Panc1 (cell line): ENCODE measurements at regions of chr14 and their contacts with region 1.

Region 1: DNA sequence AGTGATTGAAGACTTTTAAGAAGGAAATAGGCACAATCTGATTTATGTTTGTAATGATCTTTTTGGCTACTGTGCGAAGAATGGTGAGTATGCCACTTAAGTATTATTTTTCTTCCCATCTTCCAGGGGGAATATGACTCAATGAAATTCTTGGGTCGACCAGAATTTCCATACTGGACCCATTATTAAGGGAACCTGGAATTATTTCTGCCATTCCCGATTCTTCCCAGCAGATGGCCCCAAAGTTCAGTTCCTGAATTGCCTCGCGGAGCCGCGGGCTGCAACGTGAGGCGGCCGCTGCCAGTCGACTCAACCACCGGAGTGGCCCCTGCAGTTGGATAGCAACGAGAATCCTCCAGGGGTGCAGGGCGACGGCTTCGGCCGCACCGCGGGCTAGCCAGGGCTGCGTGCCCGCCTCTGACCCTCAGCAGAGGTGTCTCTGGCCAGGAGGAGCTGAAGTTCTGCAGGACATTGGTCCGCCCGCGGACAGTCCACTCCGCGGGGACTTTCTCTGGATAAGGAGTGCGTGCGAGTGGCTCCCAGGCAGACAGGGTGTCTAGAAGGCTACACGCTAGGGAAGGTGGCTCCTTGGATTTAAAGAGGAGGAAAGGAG is 628 bp upstream of the TSHR start:
- DNase-seq: peak; percentile 33
- ATAC-seq: peak; percentile 95
- H3K4me3 ChIP-seq: peak overlapping the region; percentile 39 to 60
- H3K27ac ChIP-seq: no peak overlapping the region
- H3K4me1 ChIP-seq: no peaks in the 10 kb centered on the region
- H3K27me3 ChIP-seq: peaks cover 13% of the 10 kb centered on the region
- CTCF ChIP-seq: peak; percentile 82

Region 2: GRCh38 chr14:80987235-80988032 is 32.6 kb after region 1 on chr14:
- CTCF ChIA-PET with region 1: interaction called, 7 read pairs
- POLR2A ChIA-PET with region 1: no interaction called
- in situ Hi-C with region 1: no loop called
- intact Hi-C with region 1: loop called (anchors 1 kb)
- DNase-seq: peak; percentile 55
- ATAC-seq: peak; percentile 77; the same call in 1 of the 2 replicates
- H3K4me3 ChIP-seq: no peak overlapping the region
- H3K27ac ChIP-seq: no peak overlapping the region
- H3K4me1 ChIP-seq: no peaks in the 10 kb centered on the region
- H3K27me3 ChIP-seq: no peaks in the 10 kb centered on the region; the same call in 1 of the 2 replicates
- CTCF ChIP-seq: peak; percentile 85

Region 3: GRCh38 chr14:81170104-81170828 is 215.5 kb after region 1 on chr14:
- CTCF ChIA-PET with region 1: no interaction called
- POLR2A ChIA-PET with region 1: no interaction called
- in situ Hi-C with region 1: no loop called
- intact Hi-C with region 1: loop called (anchors 10 kb)
- DNase-seq: peak; percentile 71
- ATAC-seq: peak; percentile 100
- H3K4me3 ChIP-seq: peak overlapping the region; percentile 57 to 61
- H3K27ac ChIP-seq: peak overlapping the region; percentile 82
- H3K4me1 ChIP-seq: no peaks in the 10 kb centered on the region; the same call in 1 of the 2 replicates
- H3K27me3 ChIP-seq: no peaks in the 10 kb centered on the region
- CTCF ChIP-seq: peak; percentile 88